ENCODE measurements at regions of chr6 and their contacts with region 1.

Region 1: GRCh38 chr6:26216356-26216885 is 129.2 kb downstream of the HFE start:
- DNase-seq: peak; percentile 99
- H3K4me3 ChIP-seq: peak overlapping the region in 2 of 3 experiments; percentile 42 to 82
- H3K27ac ChIP-seq: peak overlapping the region; percentile 89
- H3K4me1 ChIP-seq: peaks cover 6% of the 10 kb centered on the region
- H3K27me3 ChIP-seq: no peaks in the 10 kb centered on the region
- CTCF ChIP-seq: no peak
- POLR2A ChIP-seq: peak; percentile 99

Region 2: GRCh38 chr6:26025894-26026832 is 190.3 kb before region 1 on chr6:
- CTCF ChIA-PET with region 1: no interaction called
- POLR2A ChIA-PET with region 1: interaction called, 13 read pairs
- dilution Hi-C with region 1: no loop called
- intact Hi-C with region 1: no loop called
- DNase-seq: peak; percentile 96
- H3K4me3 ChIP-seq: peak overlapping the region; percentile 1 to 59 (median 55)
- H3K27ac ChIP-seq: peak overlapping the region; percentile 95
- H3K4me1 ChIP-seq: peaks cover 18% of the 10 kb centered on the region
- H3K27me3 ChIP-seq: no peaks in the 10 kb centered on the region
- CTCF ChIP-seq: peak; percentile 89
- POLR2A ChIP-seq: no peak

Region 3: DNA sequence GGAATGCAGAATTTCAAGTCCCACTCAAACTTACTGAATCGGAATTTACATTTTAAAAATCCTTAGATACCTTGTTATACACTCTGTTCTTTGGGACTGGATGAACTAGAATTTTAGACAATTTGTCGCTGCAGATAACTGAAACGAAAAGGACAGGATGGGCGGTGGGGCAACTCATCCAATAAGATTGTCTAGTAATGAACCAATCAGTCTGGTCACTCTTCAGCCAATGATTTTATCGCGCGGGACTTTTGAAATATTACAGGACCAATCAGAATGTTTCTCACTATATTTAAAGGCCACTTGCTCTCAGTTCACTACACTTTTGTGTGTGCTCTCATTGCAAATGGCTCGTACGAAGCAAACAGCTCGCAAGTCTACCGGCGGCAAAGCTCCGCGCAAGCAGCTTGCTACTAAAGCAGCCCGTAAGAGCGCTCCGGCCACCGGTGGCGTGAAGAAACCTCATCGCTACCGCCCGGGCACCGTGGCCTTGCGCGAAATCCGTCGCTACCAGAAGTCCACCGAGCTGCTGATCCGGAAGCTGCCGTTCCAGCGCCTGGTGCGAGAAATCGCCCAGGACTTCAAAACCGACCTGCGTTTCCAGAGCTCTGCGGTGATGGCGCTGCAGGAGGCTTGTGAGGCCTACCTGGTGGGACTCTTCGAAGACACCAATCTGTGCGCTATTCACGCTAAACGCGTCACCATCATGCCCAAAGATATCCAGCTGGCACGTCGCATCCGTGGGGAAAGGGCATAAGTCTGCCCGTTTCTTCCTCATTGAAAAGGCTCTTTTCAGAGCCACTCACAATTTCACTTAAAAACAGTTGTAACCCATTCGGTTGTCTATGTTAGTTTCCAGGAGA is 171.1 kb before region 1 on chr6:
- CTCF ChIA-PET with region 1: interaction called, 3 read pairs
- POLR2A ChIA-PET with region 1: interaction called, 11 read pairs
- dilution Hi-C with region 1: no loop called
- intact Hi-C with region 1: no loop called
- DNase-seq: peak; percentile 97
- H3K4me3 ChIP-seq: peak overlapping the region; percentile 3 to 62 (median 45)
- H3K27ac ChIP-seq: peak overlapping the region; percentile 92
- H3K4me1 ChIP-seq: peaks cover 19% of the 10 kb centered on the region
- H3K27me3 ChIP-seq: no peaks in the 10 kb centered on the region
- CTCF ChIP-seq: peak in 1 of 2 donors; percentile 23
- POLR2A ChIP-seq: peak; percentile 98

Region 4: GRCh38 chr6:26175428-26176181 is 40.8 kb before region 1 on chr6:
- CTCF ChIA-PET with region 1: interaction called, 11 read pairs
- POLR2A ChIA-PET with region 1: interaction called, 7 read pairs
- dilution Hi-C with region 1: no loop called
- intact Hi-C with region 1: loop called (anchors 1 kb)
- DNase-seq: peak; percentile 85
- H3K4me3 ChIP-seq: no peak overlapping the region
- H3K27ac ChIP-seq: no peak overlapping the region
- H3K4me1 ChIP-seq: peaks cover 11% of the 10 kb centered on the region
- H3K27me3 ChIP-seq: no peaks in the 10 kb centered on the region
- CTCF ChIP-seq: peak; percentile 46 to 51
- POLR2A ChIP-seq: no peak

Region 5: DNA sequence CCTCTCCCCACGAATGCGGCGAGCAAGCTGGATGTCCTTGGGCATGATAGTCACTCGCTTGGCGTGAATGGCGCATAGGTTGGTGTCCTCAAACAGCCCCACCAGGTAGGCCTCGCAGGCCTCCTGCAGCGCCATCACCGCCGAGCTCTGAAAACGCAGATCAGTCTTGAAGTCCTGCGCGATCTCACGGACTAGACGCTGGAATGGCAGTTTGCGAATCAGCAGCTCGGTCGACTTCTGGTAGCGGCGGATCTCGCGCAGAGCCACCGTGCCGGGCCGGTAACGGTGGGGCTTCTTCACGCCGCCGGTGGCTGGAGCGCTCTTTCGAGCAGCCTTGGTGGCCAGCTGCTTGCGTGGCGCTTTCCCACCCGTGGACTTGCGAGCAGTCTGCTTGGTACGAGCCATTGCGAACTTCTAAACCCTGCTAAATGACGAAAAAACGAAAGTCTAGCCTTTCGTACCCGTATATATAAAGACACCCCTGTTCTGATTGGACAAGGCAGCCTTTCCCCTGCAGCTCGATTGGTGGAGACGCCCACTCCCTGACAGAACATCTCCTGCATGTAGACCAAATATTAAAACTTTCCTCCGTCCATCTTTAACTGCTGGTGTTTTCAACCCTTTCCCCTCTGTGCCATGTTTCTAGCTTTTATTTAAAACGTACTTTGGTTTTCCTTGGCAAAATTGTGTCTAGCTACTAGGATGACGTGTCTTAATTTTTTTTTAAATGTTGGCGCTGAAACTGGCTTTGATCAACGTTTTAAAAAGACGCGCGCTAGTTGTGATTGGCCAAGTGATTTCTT is 19.4 kb before region 1 on chr6:
- CTCF ChIA-PET with region 1: interaction called, 24 read pairs
- POLR2A ChIA-PET with region 1: interaction called, 122 read pairs
- dilution Hi-C with region 1: no loop called
- intact Hi-C with region 1: no loop called
- DNase-seq: peak; percentile 96
- H3K4me3 ChIP-seq: peak overlapping the region; percentile 1 to 98 (median 52)
- H3K27ac ChIP-seq: peak overlapping the region; percentile 94
- H3K4me1 ChIP-seq: peaks cover 19% of the 10 kb centered on the region
- H3K27me3 ChIP-seq: no peaks in the 10 kb centered on the region
- CTCF ChIP-seq: no peak
- POLR2A ChIP-seq: peak; percentile 97

Region 6: GRCh38 chr6:26234421-26235296 is 18.2 kb after region 1 on chr6:
- CTCF ChIA-PET with region 1: interaction called, 13 read pairs
- POLR2A ChIA-PET with region 1: interaction called, 43 read pairs
- dilution Hi-C with region 1: no loop called
- intact Hi-C with region 1: loop called (anchors 1 kb)
- DNase-seq: peak; percentile 89
- H3K4me3 ChIP-seq: peak overlapping the region; percentile 30 to 73 (median 59)
- H3K27ac ChIP-seq: peak overlapping the region; percentile 83
- H3K4me1 ChIP-seq: peaks cover 25% of the 10 kb centered on the region
- H3K27me3 ChIP-seq: no peaks in the 10 kb centered on the region
- CTCF ChIP-seq: no peak
- POLR2A ChIP-seq: peak; percentile 5

Region 7: GRCh38 chr6:26285143-26286134 is 69.0 kb after region 1 on chr6:
- CTCF ChIA-PET with region 1: interaction called, 5 read pairs
- POLR2A ChIA-PET with region 1: interaction called, 21 read pairs
- dilution Hi-C with region 1: no loop called
- intact Hi-C with region 1: loop called (anchors 1 kb)
- DNase-seq: peak; percentile 98
- H3K4me3 ChIP-seq: peak overlapping the region; percentile 5 to 68 (median 58)
- H3K27ac ChIP-seq: peak overlapping the region; percentile 68
- H3K4me1 ChIP-seq: no peaks in the 10 kb centered on the region
- H3K27me3 ChIP-seq: no peaks in the 10 kb centered on the region
- CTCF ChIP-seq: no peak
- POLR2A ChIP-seq: peak; percentile 99